ENCODE measurements at regions of chr20 and their contacts with region 1.

Region 1: DNA sequence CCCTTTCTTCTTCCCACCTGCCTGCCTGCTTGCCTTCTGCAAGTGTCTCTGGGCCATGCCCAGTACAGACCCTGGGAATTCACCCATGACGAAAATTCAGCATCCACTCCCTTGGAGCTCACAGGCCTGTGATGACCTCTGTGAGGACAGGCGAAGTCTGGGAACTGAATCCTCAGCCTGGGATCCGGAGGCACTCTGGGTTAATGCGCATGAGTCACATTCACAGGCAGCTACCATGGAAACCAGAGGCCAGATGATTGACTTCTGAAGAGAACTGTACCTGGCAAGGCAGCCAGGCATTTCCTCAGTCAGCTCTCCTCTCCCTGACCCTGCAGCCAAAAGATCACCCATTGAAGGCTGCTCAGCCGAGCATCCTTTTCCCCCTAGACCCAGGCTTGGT is 41.0 kb downstream of the SLC9A8 start:
- DNase-seq: no peak
- H3K4me3 ChIP-seq: no peak overlapping the region
- H3K27ac ChIP-seq: no peak overlapping the region
- H3K4me1 ChIP-seq: peaks cover 6% of the 10 kb centered on the region
- H3K27me3 ChIP-seq: no peaks in the 10 kb centered on the region
- CTCF ChIP-seq: no peak

Region 2: GRCh38 chr20:49344975-49345374 is 508.7 kb before region 1 on chr20:
- CTCF ChIA-PET with region 1: no interaction called
- POLR2A ChIA-PET with region 1: no interaction called
- intact Hi-C with region 1: loop called (anchors 10 kb)
- DNase-seq: peak; percentile 86
- H3K4me3 ChIP-seq: peak overlapping the region; percentile 9
- H3K27ac ChIP-seq: peak overlapping the region; percentile 59
- H3K4me1 ChIP-seq: peaks cover 10% of the 10 kb centered on the region
- H3K27me3 ChIP-seq: no peaks in the 10 kb centered on the region
- CTCF ChIP-seq: no peak